GM12878 (cell line): ENCODE measurements at regions of chr7 and their contacts with region 1.

Region 1: GRCh38 chr7:31443457-31443856 is 70.4 kb upstream of the ITPRID1 start:
- DNase-seq: peak; percentile 21
- ATAC-seq: peak; percentile 89
- H3K4me3 ChIP-seq: no peak overlapping the region
- H3K27ac ChIP-seq: no peak overlapping the region
- H3K4me1 ChIP-seq: no peaks in the 10 kb centered on the region
- H3K27me3 ChIP-seq: 0 out of 4 replicates have a peak, but pooled peaks cover 0 to 3% of the 10 kb centered on the region in 2 experiments
- CTCF ChIP-seq: peak; percentile 62 to 84 (median 77)
- EP300 ChIP-seq: no peak
- POLR2A ChIP-seq: no peak
- RAD21 ChIP-seq: peak; percentile 77

Region 2: DNA sequence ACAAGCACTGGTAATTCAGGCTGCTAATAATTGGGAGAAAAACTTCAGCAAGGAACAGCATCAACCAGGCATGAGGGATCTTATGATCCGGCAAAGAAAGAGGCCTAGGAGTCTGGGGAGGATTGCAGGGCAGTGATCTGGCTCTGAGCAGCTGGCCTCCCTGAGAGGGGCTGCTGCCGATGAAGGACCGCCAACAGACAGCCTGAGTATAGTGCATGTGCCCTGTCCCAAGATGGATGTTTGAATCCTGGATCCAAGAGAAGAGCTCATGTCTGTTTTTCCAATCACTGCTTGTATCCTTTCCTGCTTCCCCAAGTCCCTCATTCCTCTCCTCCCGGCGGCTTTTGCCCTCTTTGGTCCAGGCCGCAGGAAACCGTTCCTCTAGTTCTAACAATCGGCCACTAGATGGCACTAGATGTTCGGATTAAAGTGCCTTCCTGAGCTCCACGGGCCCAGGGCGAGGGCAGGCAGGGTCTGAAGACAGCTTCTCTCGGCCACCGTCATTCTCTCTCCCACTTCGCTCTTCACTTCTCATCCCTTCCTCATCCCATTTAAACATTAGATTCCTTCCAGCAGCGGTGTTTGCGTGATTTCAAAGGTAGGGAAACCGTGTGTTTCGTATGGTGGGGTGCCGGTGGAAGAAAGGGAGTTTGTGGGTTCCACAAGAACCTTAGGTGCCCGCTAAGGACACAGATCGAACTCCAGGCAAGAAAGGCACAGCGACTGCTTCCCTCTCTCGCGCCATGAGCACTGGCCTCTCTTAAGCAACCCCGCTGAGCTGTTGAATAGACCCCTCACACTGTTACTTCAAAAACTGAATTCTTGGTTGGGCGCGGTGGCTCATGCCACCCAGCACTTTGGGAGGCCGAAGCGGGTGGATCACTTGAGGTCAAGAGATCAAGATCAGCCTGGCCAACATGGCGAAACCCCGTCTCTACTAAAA is 308.9 kb before region 1 on chr7:
- CTCF ChIA-PET with region 1: interaction called, 25 read pairs
- POLR2A ChIA-PET with region 1: no interaction called
- RAD21 ChIA-PET with region 1: interaction called, 13 read pairs
- SMC1A ChIA-PET with region 1: interaction called, 8 read pairs
- in situ Hi-C with region 1: no loop called
- intact Hi-C with region 1: loop called (anchors 5 kb)
- DNase-seq: no peak
- ATAC-seq: peak; percentile 97
- H3K4me3 ChIP-seq: no peak overlapping the region
- H3K27ac ChIP-seq: no peak overlapping the region
- H3K4me1 ChIP-seq: no peaks in the 10 kb centered on the region
- H3K27me3 ChIP-seq: no peaks in the 10 kb centered on the region
- CTCF ChIP-seq: peak; percentile 61 to 75 (median 63)
- EP300 ChIP-seq: no peak
- POLR2A ChIP-seq: no peak
- RAD21 ChIP-seq: peak; percentile 80

Region 3: DNA sequence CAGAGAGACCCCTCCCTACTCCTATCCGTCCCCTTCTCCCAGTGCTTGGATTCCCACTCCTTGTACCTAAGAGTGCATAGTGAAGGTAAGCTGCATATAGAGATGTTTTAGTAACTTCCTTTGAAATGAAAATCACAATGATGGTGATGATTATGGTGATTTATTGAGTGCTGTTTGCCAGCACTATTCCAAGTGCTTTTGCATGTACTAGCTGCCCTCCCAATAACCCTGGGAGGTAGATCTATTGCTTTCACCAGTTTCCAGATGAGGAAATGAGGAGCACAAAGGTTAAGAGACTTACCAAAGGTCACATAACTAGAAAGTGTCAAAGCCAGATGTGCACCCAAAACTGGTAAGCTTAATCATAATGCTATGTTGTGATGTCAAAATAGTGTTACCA is 22.5 kb before region 1 on chr7:
- CTCF ChIA-PET with region 1: interaction called, 12 read pairs
- POLR2A ChIA-PET with region 1: no interaction called
- RAD21 ChIA-PET with region 1: interaction called, 5 read pairs
- SMC1A ChIA-PET with region 1: interaction called, 3 read pairs
- in situ Hi-C with region 1: no loop called
- intact Hi-C with region 1: no loop called
- DNase-seq: no peak
- ATAC-seq: no peak
- H3K4me3 ChIP-seq: no peak overlapping the region
- H3K27ac ChIP-seq: no peak overlapping the region
- H3K4me1 ChIP-seq: no peaks in the 10 kb centered on the region
- H3K27me3 ChIP-seq: no peaks in the 10 kb centered on the region
- CTCF ChIP-seq: no peak
- EP300 ChIP-seq: no peak
- POLR2A ChIP-seq: no peak
- RAD21 ChIP-seq: no peak

Region 4: GRCh38 chr7:31466036-31466435 is 22.6 kb after region 1 on chr7:
- CTCF ChIA-PET with region 1: interaction called, 11 read pairs
- POLR2A ChIA-PET with region 1: no interaction called
- RAD21 ChIA-PET with region 1: no interaction called
- SMC1A ChIA-PET with region 1: no interaction called
- in situ Hi-C with region 1: no loop called
- intact Hi-C with region 1: no loop called
- DNase-seq: no peak
- ATAC-seq: no peak; the same call in 2 of the 3 replicates
- H3K4me3 ChIP-seq: no peak overlapping the region
- H3K27ac ChIP-seq: no peak overlapping the region
- H3K4me1 ChIP-seq: no peaks in the 10 kb centered on the region
- H3K27me3 ChIP-seq: no peaks in the 10 kb centered on the region
- CTCF ChIP-seq: no peak
- EP300 ChIP-seq: no peak
- POLR2A ChIP-seq: no peak
- RAD21 ChIP-seq: no peak

Region 5: DNA sequence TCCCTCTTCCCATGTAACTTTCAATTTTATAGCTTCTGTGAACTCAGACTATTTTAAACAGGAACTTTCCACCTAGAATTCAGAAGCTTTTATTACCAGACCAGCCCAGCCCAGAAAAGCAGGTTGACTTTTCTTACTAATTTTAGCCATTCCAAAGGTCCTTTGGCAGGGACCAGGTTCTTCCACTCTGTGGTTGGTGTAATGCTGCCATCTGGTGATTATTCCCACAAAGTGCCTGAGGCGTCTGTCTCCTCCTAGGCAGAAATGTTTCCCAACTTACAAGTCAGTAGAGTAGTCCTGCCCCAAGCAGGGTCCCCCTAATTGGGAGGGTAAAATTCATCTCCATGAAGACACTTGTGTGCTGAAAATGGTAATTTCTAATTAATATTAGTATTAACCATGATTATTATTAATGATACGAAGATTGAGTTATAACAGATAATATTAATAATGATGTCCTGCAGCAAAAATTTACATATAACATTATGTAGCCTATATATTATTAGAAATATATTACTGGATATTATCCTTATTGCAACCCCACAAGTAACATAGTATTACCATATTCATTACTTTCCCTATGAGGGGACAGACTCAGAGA is 190.5 kb after region 1 on chr7:
- CTCF ChIA-PET with region 1: interaction called, 46 read pairs
- POLR2A ChIA-PET with region 1: no interaction called
- RAD21 ChIA-PET with region 1: interaction called, 13 read pairs
- SMC1A ChIA-PET with region 1: interaction called, 16 read pairs
- in situ Hi-C with region 1: no loop called
- intact Hi-C with region 1: loop called (anchors 5 kb)
- DNase-seq: no peak
- ATAC-seq: peak; percentile 66; the same call in 2 of the 3 replicates
- H3K4me3 ChIP-seq: no peak overlapping the region
- H3K27ac ChIP-seq: no peak overlapping the region
- H3K4me1 ChIP-seq: no peaks in the 10 kb centered on the region
- H3K27me3 ChIP-seq: no peaks in the 10 kb centered on the region; a peak in 1 of 4 replicates
- CTCF ChIP-seq: peak; percentile 34 to 54 (median 48); a peak in 4 of 6 replicates
- EP300 ChIP-seq: no peak
- POLR2A ChIP-seq: no peak
- RAD21 ChIP-seq: peak; percentile 61

Region 6: GRCh38 chr7:31735991-31736982 is 292.8 kb after region 1 on chr7:
- CTCF ChIA-PET with region 1: interaction called, 32 read pairs
- POLR2A ChIA-PET with region 1: interaction called, 5 read pairs
- RAD21 ChIA-PET with region 1: interaction called, 16 read pairs
- SMC1A ChIA-PET with region 1: interaction called, 18 read pairs
- in situ Hi-C with region 1: loop called (anchors 5 kb)
- intact Hi-C with region 1: loop called (anchors 1 kb)
- DNase-seq: no peak
- ATAC-seq: peak; percentile 79
- H3K4me3 ChIP-seq: no peak overlapping the region
- H3K27ac ChIP-seq: no peak overlapping the region
- H3K4me1 ChIP-seq: no peaks in the 10 kb centered on the region
- H3K27me3 ChIP-seq: no peaks in the 10 kb centered on the region; a peak in 1 of 4 replicates
- CTCF ChIP-seq: peak; percentile 82 to 90 (median 86)
- EP300 ChIP-seq: no peak
- POLR2A ChIP-seq: no peak
- RAD21 ChIP-seq: peak; percentile 84